Activated T-helper 1 cell treated with anti-CD3 and anti-CD28 coated beads, Interleukin-12 subunit alpha, Interleukin-12 subunit beta, Interleukin-2, Interleukin-4 antibody, amounts not matched to agents 30 ng/mL and 10 ng/mL and 1 ng/mL, durations not matched to agents 14 hours and 24 hours and 36 hours (primary cell): ENCODE measurements at regions of chr20 and their contacts with region 1.

Region 1: DNA sequence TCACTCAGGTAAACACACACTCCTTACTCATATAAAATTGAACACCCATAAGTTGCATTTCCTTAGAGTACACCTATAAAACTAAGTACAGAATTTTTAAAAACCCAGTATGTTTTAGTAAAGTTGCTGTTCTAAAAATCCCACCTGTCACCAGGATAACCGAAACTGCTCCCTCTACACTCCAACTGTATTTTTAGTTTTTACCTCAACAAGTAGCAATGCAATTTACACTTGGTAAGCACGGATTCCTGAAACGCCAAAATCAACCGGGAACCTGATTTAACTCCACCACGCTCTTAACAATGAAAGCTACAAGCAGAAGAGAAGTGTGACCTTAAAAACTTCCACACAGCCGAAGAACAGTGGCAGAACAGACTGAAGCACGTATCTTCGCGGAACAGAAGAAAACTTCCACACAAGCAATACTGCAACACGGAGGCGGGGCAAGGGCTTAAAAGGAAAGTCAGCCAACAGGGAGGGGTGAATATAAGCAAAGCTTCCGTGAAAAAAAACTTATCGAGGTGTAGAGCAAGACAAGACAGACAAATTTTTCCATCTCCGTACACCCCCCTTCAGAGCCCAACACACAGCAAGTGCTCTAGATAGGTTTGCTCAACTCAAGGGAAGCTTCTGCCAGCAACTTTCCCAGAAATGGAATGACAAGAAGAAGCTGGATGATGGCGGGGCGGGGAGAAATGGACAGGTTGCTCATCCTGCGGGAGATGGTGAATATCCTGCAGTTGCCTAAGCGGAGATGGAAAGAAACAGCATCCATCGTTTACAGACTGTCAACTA is 1.4 kb downstream of the STAU1 start:
- DNase-seq: peak; percentile 66
- H3K4me3 Mint-ChIP-seq: peak overlapping the region; percentile 89
- H3K27ac Mint-ChIP-seq: peak overlapping the region; percentile 81
- H3K4me1 Mint-ChIP-seq: peaks cover 50% of the 10 kb centered on the region
- H3K27me3 Mint-ChIP-seq: peaks cover 4% of the 10 kb centered on the region

Region 2: DNA sequence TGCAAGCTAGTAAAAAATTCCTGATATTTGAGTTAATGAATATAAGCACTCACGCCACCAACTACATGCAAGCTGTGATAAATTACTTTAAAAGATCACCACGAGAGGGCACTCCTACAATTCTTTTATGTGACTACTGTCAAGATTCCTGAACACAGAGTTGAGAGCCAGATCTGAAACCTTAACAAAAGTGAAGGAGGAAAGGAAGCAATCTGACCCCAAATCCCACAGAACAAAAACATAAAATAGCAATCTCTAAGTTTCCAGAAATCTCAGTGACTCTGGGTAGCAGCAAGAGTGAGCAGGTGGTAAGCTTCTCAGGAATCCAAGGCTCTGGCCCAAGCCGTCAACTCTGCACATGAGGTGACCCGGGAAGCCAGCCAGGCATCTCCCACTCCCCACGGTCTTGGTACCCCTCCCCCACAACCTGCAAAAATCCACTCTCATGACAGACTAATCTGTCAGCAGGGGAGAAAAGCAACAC is 53.7 kb before region 1 on chr20:
- intact Hi-C with region 1: loop called (anchors 1 kb)
- DNase-seq: no peak
- H3K4me3 Mint-ChIP-seq: no peak overlapping the region
- H3K27ac Mint-ChIP-seq: no peak overlapping the region
- H3K4me1 Mint-ChIP-seq: peaks cover 15% of the 10 kb centered on the region
- H3K27me3 Mint-ChIP-seq: no peaks in the 10 kb centered on the region

Region 3: DNA sequence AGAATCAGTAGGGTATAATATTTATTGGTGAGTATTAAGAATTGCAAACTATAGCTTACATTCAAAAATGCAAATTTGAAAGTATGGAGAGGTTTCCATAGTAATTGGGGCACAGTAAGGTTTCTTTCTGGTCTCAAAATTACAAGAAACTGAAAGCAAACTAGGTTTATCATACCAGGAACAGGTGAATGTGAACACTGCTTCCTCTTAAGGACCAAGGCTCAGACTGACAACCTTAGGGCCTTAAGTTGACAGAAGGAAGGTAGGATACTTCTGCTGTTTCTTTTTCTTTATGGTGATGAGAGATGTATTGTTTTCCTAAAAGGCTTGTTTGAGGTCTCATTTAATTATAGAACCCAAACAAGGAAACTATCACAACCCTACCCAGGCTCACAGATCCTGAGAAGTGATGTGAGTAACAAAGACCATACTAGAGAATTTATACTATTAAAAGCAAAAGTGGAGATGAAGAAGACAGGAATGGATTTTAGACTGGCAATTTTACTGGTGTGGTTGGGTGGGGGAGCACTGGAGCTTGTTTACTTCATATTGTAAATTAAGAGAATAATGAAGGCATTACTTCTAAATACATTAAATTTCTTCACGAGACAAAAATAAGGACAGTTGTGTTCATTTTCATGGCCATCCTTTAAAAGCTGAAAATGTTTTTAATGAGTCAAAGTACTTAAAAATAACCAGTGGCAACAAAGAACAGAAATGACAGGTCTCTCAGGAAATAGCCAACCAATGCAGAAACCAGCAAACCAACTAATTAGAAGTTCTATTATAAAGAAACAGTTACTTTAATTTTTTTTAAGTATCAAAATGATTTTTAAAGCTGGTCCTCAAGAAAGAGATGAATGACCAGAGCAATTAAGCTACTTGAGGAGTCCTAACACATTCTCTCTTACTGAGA is 19.9 kb before region 1 on chr20:
- intact Hi-C with region 1: loop called (anchors 1 kb)
- DNase-seq: no peak
- H3K4me3 Mint-ChIP-seq: peak overlapping the region; percentile 72
- H3K27ac Mint-ChIP-seq: peak overlapping the region; percentile 89
- H3K4me1 Mint-ChIP-seq: peaks cover 51% of the 10 kb centered on the region
- H3K27me3 Mint-ChIP-seq: no peaks in the 10 kb centered on the region

Region 4: GRCh38 chr20:49310705-49311104 is 124.0 kb after region 1 on chr20:
- intact Hi-C with region 1: no loop called
- DNase-seq: no peak
- H3K4me3 Mint-ChIP-seq: peak overlapping the region; percentile 8
- H3K27ac Mint-ChIP-seq: peak overlapping the region; percentile 51
- H3K4me1 Mint-ChIP-seq: peaks cover 15% of the 10 kb centered on the region
- H3K27me3 Mint-ChIP-seq: peaks cover 12% of the 10 kb centered on the region